Naive thymus-derived CD4-positive, alpha-beta T cell (primary cell): ENCODE measurements at regions of chr22 and their contacts with region 1.

Region 1: DNA sequence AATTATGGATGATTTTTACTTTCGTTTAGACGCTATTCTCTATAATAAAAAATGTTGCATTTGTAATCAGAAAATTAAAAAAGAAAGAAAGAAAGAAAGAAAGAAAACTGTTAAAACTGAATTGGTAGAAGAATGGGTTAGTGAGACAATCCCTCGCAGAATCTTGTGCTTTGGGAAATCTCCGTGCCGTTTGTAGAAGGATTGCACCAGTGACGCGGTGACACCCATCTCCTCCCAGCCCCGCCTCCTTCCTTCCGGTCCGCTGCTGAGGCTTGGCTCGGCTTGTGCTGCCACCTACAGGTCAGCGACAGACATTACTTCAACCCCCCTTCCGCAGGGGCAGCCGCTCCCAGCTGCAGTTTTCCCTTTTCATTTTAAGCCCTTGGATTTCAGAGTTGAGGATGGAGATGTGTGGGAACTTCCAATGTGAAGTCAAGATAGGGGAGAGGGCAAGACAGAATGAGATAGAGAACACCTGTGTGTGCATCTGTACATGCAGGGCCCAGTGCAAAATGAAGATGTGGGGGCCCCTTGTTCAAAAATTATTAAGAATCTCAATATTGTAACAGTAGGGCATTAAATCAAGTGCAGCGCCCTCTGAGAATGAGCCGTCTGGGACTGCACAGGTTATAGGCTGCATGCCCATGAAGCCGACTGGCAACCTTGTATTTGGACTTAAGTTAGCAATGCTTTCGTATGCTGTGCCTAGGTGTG is 41.1 kb downstream of the TST start:
- DNase-seq: peak; percentile 76 to 90 (median 88)
- ATAC-seq: peak; percentile 98
- H3K4me3 ChIP-seq: peak overlapping the region; percentile 69
- H3K4me3 Mint-ChIP-seq: peak overlapping the region; percentile 87 to 99 (median 96)
- H3K27ac ChIP-seq: peak overlapping the region; percentile 77
- H3K27ac Mint-ChIP-seq: peak overlapping the region; percentile 81 to 97 (median 96)
- H3K4me1 ChIP-seq: peaks cover 0 to 4% of the 10 kb centered on the region in 2 donors
- H3K4me1 Mint-ChIP-seq: peaks cover 5 to 16% (median 9%) of the 10 kb centered on the region in 7 donors
- H3K27me3 ChIP-seq: no peaks in the 10 kb centered on the region
- H3K27me3 Mint-ChIP-seq: peaks cover 0 to 25% (median 4%) of the 10 kb centered on the region in 5 donors

Region 2: DNA sequence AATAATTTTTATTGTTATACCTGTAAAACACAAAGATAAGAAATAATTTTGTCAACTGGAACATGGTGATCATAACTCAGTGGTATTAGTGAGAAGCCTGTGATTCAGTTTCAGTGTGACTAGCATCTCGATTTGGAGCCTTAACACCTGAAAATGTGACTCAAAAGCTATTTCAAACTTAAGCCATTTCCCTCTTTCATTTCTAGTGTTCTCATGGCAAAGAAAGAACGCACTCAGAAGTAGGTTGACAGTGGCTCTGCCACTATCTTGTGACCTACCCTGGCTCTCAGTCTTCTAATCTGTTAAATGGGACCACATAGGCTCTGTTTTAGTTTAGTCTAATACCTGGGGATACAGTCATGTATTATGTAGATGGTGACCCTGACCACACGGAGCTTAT is 1849.5 kb before region 1 on chr22:
- CTCF ChIA-PET with region 1: no interaction called
- POLR2A ChIA-PET with region 1: no interaction called
- intact Hi-C with region 1: no loop called
- DNase-seq: no peak
- ATAC-seq: no peak
- H3K4me3 ChIP-seq: no peak overlapping the region
- H3K4me3 Mint-ChIP-seq: no peak overlapping the region
- H3K27ac ChIP-seq: no peak overlapping the region
- H3K27ac Mint-ChIP-seq: no peak overlapping the region
- H3K4me1 ChIP-seq: no peaks in the 10 kb centered on the region
- H3K4me1 Mint-ChIP-seq: peaks cover 0 to 7% (median 0%) of the 10 kb centered on the region in 7 donors
- H3K27me3 ChIP-seq: no peaks in the 10 kb centered on the region
- H3K27me3 Mint-ChIP-seq: peaks cover 4 to 48% (median 38%) of the 10 kb centered on the region in 5 donors

Region 3: GRCh38 chr22:36757668-36758211 is 220.4 kb before region 1 on chr22:
- CTCF ChIA-PET with region 1: interaction called, 10 read pairs
- POLR2A ChIA-PET with region 1: no interaction called
- intact Hi-C with region 1: loop called (anchors 1 kb)
- DNase-seq: peak; percentile 32 to 75 (median 60)
- ATAC-seq: peak; percentile 89
- H3K4me3 ChIP-seq: no peak overlapping the region
- H3K4me3 Mint-ChIP-seq: no peak overlapping the region
- H3K27ac ChIP-seq: no peak overlapping the region
- H3K27ac Mint-ChIP-seq: peak overlapping the region in 1 of 9 donors; percentile 38
- H3K4me1 ChIP-seq: peaks cover 0 to 5% of the 10 kb centered on the region in 2 donors
- H3K4me1 Mint-ChIP-seq: peaks cover 0 to 22% (median 10%) of the 10 kb centered on the region in 7 donors
- H3K27me3 ChIP-seq: no peaks in the 10 kb centered on the region
- H3K27me3 Mint-ChIP-seq: peaks cover 1 to 11% (median 6%) of the 10 kb centered on the region in 5 donors

Region 4: GRCh38 chr22:36781656-36782627 is 196.2 kb before region 1 on chr22:
- CTCF ChIA-PET with region 1: interaction called, 14 read pairs
- POLR2A ChIA-PET with region 1: interaction called, 3 read pairs
- intact Hi-C with region 1: loop called (anchors 1 kb)
- DNase-seq: peak; percentile 66 to 92 (median 80)
- ATAC-seq: peak; percentile 98
- H3K4me3 ChIP-seq: no peak overlapping the region
- H3K4me3 Mint-ChIP-seq: peak overlapping the region in 4 of 10 donors; percentile 8 to 57 (median 43)
- H3K27ac ChIP-seq: no peak overlapping the region
- H3K27ac Mint-ChIP-seq: peak overlapping the region in 5 of 9 donors; percentile 27 to 72 (median 58)
- H3K4me1 ChIP-seq: peaks cover 4 to 10% of the 10 kb centered on the region in 2 donors
- H3K4me1 Mint-ChIP-seq: peaks cover 9 to 34% (median 18%) of the 10 kb centered on the region in 7 donors
- H3K27me3 ChIP-seq: no peaks in the 10 kb centered on the region
- H3K27me3 Mint-ChIP-seq: peaks cover 0 to 11% (median 7%) of the 10 kb centered on the region in 5 donors

Region 5: DNA sequence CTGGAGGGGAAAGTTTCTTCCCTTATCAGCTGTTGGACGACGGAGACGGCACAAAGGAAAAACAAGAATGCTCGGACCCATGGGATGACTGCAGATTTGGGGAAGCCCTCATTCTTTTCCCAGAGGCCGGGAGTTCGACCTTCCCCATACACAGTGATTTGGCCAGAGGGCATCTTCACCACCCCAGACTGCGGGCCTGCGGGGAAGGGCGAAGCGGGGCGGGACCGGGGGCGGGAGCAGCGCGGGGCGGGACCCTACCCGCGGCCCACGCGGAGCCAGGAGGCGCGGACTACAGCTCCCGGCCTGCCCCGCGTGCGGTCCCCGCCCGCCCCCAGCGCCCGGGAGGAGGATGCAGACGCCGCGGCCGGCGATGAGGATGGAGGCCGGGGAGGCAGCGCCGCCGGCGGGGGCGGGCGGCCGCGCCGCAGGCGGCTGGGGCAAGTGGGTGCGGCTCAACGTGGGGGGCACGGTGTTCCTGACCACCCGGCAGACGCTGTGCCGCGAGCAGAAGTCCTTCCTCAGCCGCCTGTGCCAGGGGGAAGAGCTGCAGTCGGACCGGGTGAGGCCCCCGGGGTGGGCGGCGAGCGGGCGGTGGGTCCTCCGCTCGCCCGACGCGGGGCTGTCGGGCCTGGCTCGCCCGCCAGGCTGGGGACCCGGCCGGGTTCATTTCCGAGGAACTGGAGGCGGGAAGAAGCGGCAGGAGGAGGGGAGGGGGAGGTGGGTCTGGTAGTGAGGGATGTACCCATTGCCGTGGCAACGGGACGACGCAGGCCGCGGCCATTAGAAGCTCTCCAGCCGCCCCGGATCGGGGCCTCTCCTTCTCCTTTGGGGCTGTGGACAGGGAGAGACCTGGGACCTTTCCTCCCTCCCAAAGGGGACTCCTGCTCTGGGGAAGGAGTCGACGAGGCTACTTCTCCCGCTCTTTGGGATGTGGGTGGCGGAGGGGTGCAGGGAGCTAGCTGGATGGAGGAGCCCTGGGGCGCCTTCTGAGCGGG is 73.6 kb after region 1 on chr22 and contains the start of gene KCTD17:
- CTCF ChIA-PET with region 1: no interaction called
- POLR2A ChIA-PET with region 1: no interaction called
- intact Hi-C with region 1: loop called in 1 of 2 experiments (anchors 2 kb)
- DNase-seq: peak; percentile 50 to 87 (median 67)
- ATAC-seq: peak; percentile 99
- H3K4me3 ChIP-seq: peak within 1 kb of the TSS; percentile 74
- H3K4me3 Mint-ChIP-seq: peak within 1 kb of the TSS; percentile 73 to 94 (median 86)
- H3K27ac ChIP-seq: peak within 1 kb of the TSS; percentile 72
- H3K27ac Mint-ChIP-seq: peak within 1 kb of the TSS in 8 of 9 donors; percentile 40 to 89 (median 80)
- H3K4me1 ChIP-seq: peaks cover 0 to 7% of the 10 kb centered on the region in 2 donors
- H3K4me1 Mint-ChIP-seq: peaks cover 5 to 15% (median 14%) of the 10 kb centered on the region in 7 donors
- H3K27me3 ChIP-seq: no peaks in the 10 kb centered on the region
- H3K27me3 Mint-ChIP-seq: no peaks in the 10 kb centered on the region
- total RNA-seq, gene KCTD17: 19.8 to 44.5 (median 24.9) TPM